ENCODE measurements at regions of chrX and their contacts with region 1.

Region 1: GRCh38 chrX:50747471-50747900 is 66.5 kb downstream of the SHROOM4 start:
- DNase-seq: peak; percentile 15
- H3K4me3 Mint-ChIP-seq: no peak overlapping the region
- H3K27ac Mint-ChIP-seq: no peak overlapping the region
- H3K4me1 Mint-ChIP-seq: no peaks in the 10 kb centered on the region
- H3K27me3 Mint-ChIP-seq: peaks cover 9% of the 10 kb centered on the region

Region 2: GRCh38 chrX:50770702-50771101 is 23.2 kb after region 1 on chrX:
- CTCF ChIA-PET with region 1: no interaction called
- intact Hi-C with region 1: no loop called
- DNase-seq: no peak
- H3K4me3 Mint-ChIP-seq: no peak overlapping the region
- H3K27ac Mint-ChIP-seq: no peak overlapping the region
- H3K4me1 Mint-ChIP-seq: no peaks in the 10 kb centered on the region
- H3K27me3 Mint-ChIP-seq: no peaks in the 10 kb centered on the region

Region 3: GRCh38 chrX:50905334-50905733 is 157.8 kb after region 1 on chrX:
- CTCF ChIA-PET with region 1: interaction called, 3 read pairs
- intact Hi-C with region 1: loop called (anchors 1 kb)
- DNase-seq: peak; percentile 4
- H3K4me3 Mint-ChIP-seq: no peak overlapping the region
- H3K27ac Mint-ChIP-seq: no peak overlapping the region
- H3K4me1 Mint-ChIP-seq: no peaks in the 10 kb centered on the region
- H3K27me3 Mint-ChIP-seq: no peaks in the 10 kb centered on the region

Region 4: DNA sequence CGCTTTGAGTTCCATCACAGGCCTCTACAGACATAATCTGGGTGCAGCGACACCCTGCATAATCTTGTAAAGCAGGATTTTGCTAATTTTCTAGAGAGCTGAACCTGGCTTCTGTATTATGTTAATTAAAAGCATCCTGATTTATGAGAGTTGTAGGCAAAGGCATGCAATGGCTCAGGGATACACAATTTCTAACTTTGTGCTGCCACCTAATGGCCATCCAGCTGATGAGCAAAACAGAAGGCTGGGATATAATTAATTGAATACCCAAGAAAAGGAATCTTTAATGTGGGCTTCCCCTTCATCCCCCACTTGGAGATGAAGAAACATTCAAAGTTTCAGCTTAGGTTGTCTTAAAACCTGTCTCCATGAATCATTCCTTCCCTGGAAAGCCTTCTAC is 241.2 kb after region 1 on chrX:
- CTCF ChIA-PET with region 1: interaction called, 3 read pairs
- intact Hi-C with region 1: loop called (anchors 2 kb)
- DNase-seq: peak; percentile 36
- H3K4me3 Mint-ChIP-seq: no peak overlapping the region
- H3K27ac Mint-ChIP-seq: no peak overlapping the region
- H3K4me1 Mint-ChIP-seq: no peaks in the 10 kb centered on the region
- H3K27me3 Mint-ChIP-seq: peaks cover 2% of the 10 kb centered on the region